ENCODE measurements at regions of chr18 and their contacts with region 1.

Region 1: DNA sequence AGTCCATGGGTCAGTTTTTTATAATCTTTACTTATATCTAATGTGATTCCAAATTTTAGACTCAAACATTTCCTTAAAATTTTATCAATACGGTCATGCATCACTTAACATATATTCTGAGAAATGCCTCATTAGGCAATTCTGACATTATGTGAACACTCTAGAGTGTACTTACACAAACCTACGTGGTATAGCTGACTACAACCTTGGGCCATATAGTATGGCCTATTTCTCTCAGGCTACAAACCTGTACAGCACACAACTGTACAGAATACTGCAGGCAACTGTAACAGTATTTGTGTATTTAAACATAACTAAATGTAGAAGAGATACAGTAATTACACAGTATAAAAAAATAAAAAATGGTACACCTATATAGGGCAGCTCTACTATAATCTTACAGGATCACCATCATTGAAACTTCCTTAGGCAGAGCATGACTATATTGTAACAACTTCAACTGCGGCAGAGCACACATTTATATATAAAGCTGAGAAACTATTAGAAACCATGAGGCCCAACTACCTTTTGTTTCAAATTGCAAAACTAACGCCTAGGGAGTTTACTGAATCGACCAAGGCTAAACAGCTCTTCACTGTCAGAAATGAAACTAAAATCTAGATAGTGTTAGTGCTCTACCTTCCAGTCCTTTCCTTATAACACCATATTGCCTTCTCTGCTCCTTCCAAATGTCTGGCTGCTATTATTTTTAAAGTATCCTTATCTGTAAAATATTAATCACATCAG is 6.9 kb downstream of the YES1 start:
- DNase-seq: peak; percentile 34
- H3K4me3 ChIP-seq: peak overlapping the region in 1 of 3 experiments; percentile 8
- H3K27ac ChIP-seq: no peak overlapping the region
- H3K4me1 ChIP-seq: peaks cover 38% of the 10 kb centered on the region
- H3K27me3 ChIP-seq: no peaks in the 10 kb centered on the region
- CTCF ChIP-seq: no peak
- POLR2A ChIP-seq: no peak

Region 2: DNA sequence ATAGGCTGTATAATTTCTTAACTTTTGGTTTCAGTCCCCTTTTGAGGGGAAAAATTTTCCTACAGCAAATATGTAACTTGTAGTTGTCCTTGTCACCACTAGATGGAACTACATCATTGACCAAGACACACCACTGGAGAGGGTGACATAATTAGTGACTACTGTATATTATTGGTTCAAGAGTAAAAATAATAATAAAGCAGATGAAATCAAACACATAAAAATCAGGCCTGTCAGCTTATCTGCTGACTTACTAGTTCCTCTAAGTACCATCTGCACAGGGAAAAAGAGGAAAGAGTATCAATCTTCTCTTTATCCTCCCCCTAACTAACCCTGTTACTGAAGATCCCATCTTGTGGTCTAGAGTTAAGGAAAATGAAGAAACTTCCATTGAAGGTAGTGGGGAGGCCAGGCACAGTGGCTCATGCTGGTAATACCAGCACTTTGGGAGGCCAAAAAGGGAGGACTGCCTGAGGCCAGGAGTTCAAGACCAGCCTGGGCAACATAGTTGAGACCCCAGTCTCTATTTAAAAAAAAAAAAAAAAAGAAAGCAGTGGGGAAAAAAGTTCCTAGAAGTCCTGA is 63.2 kb before region 1 on chr18:
- CTCF ChIA-PET with region 1: interaction called, 10 read pairs
- POLR2A ChIA-PET with region 1: no interaction called
- dilution Hi-C with region 1: no loop called
- intact Hi-C with region 1: no loop called
- DNase-seq: peak; percentile 78
- H3K4me3 ChIP-seq: no peak overlapping the region
- H3K27ac ChIP-seq: peak overlapping the region; percentile 9
- H3K4me1 ChIP-seq: peaks cover 19% of the 10 kb centered on the region
- H3K27me3 ChIP-seq: no peaks in the 10 kb centered on the region
- CTCF ChIP-seq: peak; percentile 46 to 51
- POLR2A ChIP-seq: no peak

Region 3: GRCh38 chr18:785242-785641 is 19.9 kb before region 1 on chr18:
- CTCF ChIA-PET with region 1: interaction called, 6 read pairs
- POLR2A ChIA-PET with region 1: no interaction called
- dilution Hi-C with region 1: no loop called
- intact Hi-C with region 1: loop called (anchors 2 kb)
- DNase-seq: no peak
- H3K4me3 ChIP-seq: no peak overlapping the region
- H3K27ac ChIP-seq: no peak overlapping the region
- H3K4me1 ChIP-seq: peaks cover 10% of the 10 kb centered on the region
- H3K27me3 ChIP-seq: no peaks in the 10 kb centered on the region
- CTCF ChIP-seq: no peak
- POLR2A ChIP-seq: no peak